Left ventricle myocardium inferior (tissue), 1 donor: ENCODE measurements at regions of chr4 and their contacts with region 1.

Region 1: DNA sequence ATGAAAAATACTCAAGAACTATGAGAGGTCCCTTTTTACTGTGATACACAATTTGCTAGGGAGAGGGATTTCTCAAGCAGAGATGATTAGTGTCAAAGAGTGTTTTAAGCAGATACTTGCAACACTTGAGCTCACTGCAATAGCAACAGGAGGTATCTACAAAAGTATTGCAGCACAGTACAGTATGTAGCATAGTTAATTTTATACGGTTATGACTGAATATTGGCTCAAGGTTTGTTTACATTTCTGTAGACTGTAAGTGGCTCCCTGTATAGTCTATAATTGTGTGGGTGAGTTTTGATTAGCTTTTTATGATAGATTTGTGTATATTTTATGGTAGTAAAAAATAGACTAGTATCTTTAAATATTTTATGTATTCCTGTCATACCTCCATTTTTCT is 1177.2 kb downstream of the TECRL start:
- DNase-seq: no peak
- H3K4me3 ChIP-seq: no peak overlapping the region
- H3K27ac ChIP-seq: no peak overlapping the region
- H3K4me1 ChIP-seq: no peaks in the 10 kb centered on the region
- H3K27me3 ChIP-seq: no peaks in the 10 kb centered on the region
- CTCF ChIP-seq: no peak

Region 2: DNA sequence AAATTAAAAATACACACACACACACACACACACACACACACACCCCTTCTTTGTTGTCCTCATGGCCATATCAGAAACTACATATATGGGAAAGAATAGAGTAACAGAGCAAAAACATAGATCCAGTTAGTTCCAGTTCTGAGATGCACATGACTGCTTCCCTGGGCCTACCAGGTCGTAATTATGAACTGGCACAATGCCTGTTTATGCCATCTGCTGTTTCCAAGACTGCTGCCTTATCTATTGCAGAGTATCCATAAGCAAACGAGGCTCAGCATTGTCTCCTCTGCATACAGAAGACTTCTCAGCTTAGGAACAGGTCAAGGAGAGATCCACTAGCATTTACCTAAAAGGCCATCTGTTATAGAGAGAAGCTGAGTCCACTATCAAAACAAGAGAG is 388.2 kb after region 1 on chr4:
- intact Hi-C with region 1: no loop called
- DNase-seq: no peak
- H3K4me3 ChIP-seq: no peak overlapping the region
- H3K27ac ChIP-seq: no peak overlapping the region
- H3K4me1 ChIP-seq: no peaks in the 10 kb centered on the region
- H3K27me3 ChIP-seq: no peaks in the 10 kb centered on the region
- CTCF ChIP-seq: no peak

Region 3: GRCh38 chr4:63757929-63758328 is 525.9 kb after region 1 on chr4:
- intact Hi-C with region 1: loop called (anchors 10 kb)
- DNase-seq: no peak
- H3K4me3 ChIP-seq: no peak overlapping the region
- H3K27ac ChIP-seq: no peak overlapping the region
- H3K4me1 ChIP-seq: no peaks in the 10 kb centered on the region
- H3K27me3 ChIP-seq: no peaks in the 10 kb centered on the region
- CTCF ChIP-seq: no peak